Heart left ventricle (tissue), 16 donors: ENCODE measurements at regions of chr18 and their contacts with region 1.

Region 1: DNA sequence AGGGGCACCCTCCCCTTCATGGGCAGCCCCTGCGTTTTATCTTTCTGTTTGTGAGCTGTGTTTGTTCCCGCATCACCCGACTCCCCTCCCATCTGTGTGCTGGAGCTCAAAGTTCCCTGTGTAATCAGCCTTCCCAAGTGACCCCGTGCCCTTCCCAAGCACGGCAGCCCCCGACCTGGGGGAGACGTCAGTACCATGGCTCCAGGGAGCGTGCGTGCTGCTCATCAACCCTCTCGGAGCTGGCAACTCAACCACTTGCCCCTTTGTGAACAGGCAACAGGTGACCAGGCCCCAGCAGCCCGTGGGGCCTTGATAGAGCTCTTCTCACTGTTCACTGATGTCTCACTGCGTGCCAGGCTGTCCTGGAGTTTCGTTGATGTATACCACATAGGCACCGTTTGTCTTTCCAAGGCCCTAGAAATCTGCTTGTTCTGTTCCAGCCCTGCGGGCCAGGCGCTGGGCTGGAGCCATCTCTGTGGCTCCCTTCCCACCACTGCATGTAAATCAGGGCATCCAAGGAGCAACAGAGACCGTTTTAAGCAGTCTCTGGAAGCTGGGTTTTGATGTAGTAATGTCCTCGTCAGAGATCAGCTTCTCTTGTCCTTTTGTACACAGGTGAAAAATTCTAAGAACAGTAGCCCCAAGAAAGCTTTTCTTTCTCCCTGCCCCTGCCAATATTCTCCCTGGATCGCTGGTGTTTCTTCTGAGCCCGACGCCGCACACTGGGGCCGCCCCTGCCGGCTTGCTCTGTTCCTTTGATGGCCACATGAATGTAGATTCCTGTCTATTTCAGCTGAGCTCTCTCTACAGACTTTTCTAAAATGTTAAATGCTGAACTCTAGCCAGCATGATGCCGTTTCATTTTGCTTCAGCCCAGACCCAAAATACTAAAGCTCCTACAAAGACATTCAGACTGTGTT is 107.0 kb upstream of the PTPRM start:
- DNase-seq: peak; percentile 21 to 64 (median 42)
- ATAC-seq: peak; percentile 16 to 87 (median 46)
- H3K4me3 ChIP-seq: peak overlapping the region in 8 of 12 donors; percentile 13 to 51 (median 28)
- H3K27ac ChIP-seq: peak overlapping the region; percentile 12 to 85 (median 51)
- H3K4me1 ChIP-seq: peaks cover 0 to 40% (median 12%) of the 10 kb centered on the region in 12 donors
- H3K27me3 ChIP-seq: no peaks in the 10 kb centered on the region
- CTCF ChIP-seq: no peak
- POLR2A ChIP-seq: no peak

Region 2: GRCh38 chr18:7512348-7512747 is 52.2 kb after region 1 on chr18:
- intact Hi-C with region 1: loop called in 1 of 10 experiments (anchors 2 kb)
- DNase-seq: no peak
- ATAC-seq: peak in 2 of 4 donors; percentile 42 to 44
- H3K4me3 ChIP-seq: no peak overlapping the region
- H3K27ac ChIP-seq: no peak overlapping the region
- H3K4me1 ChIP-seq: peaks cover 0 to 24% (median 5%) of the 10 kb centered on the region in 12 donors
- H3K27me3 ChIP-seq: no peaks in the 10 kb centered on the region
- CTCF ChIP-seq: no peak
- POLR2A ChIP-seq: no peak